ENCODE measurements at regions of chr1 and their contacts with region 1.

Region 1: DNA sequence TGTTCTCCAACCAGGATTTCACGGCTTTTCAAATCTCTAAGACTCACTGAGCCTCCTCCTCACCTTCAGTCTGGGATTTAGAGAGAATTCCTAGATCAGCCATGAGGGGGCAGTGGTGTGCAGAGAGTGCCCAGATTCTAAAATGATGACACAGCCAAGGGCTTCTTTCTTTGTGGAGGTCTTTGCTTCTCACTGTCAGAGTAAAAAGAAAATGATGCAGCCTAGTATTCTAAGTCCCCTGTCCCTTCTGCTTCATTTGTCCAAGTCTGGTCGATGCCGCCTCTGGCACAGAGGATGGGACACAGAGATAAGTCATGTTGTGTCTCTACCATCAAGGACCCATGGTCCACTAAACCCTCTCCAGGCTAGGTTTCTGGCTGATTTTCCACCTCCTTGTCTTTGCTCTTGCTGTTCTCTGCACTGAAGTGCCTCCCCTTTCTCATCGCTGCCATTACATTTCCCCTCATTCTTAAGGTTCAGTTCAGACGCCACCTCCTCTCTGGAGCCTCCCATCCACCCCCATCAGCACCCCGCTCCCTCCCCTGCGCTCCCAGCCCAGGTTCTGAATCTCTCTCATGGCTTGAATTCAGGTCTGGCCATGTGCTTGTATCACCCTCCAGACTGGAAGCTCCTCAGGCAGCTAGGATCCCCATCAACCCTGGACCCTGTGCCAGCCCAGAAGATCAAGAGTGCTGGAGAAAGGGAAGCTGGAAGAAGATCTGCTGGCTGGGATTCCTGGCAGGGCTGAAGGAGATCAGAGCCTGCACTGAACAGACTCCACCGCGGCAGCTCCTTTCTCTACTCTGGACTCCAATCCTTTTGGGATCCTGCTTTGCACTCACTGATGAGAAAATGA is 12.0 kb upstream of the TINAGL1 start:
- DNase-seq: no peak
- ATAC-seq: peak; percentile 91
- H3K4me3 ChIP-seq: no peak overlapping the region
- H3K27ac ChIP-seq: no peak overlapping the region
- H3K4me1 ChIP-seq: no peaks in the 10 kb centered on the region
- H3K27me3 ChIP-seq: no peaks in the 10 kb centered on the region
- CTCF ChIP-seq: peak; percentile 82 to 86 (median 83)
- EP300 ChIP-seq: no peak
- POLR2A ChIP-seq: no peak
- RAD21 ChIP-seq: peak; percentile 95

Region 2: DNA sequence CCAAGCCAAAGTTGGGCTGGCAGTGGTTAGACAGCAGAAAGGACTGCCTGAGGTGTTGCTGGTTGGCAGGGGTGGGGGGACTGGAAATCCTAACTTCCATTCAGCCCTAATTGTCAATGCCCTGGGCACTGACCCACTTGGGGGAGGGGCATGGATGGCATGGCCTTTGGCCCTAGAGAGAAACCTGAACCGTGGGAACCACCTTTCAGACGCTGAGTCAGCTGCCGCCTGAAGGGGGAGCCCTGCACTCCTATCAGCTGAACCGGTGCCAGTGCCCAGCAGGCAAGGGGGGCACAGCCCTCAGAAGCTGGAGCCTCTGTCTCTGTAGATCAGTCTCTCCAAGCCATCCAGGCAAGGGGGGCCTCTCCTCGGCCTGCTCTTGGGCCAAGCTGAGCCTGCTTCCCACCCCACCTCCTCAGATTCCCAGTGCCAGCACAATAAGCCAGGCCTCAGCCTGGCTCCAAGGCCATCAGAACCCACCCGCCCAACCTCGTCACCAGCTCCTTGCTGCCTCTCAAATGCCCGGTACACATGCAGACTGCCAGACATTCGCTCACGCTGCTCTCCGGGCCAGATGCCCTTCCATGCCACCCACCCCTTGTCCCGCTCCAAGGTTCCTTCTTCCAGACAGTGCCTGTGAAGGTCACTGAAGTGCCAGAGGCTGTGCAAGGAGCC is 23.5 kb after region 1 on chr1:
- CTCF ChIA-PET with region 1: interaction called, 39 read pairs
- POLR2A ChIA-PET with region 1: no interaction called
- RAD21 ChIA-PET with region 1: interaction called, 9 read pairs
- SMC1A ChIA-PET with region 1: interaction called, 11 read pairs
- in situ Hi-C with region 1: no loop called
- intact Hi-C with region 1: no loop called
- DNase-seq: no peak
- ATAC-seq: peak; percentile 95
- H3K4me3 ChIP-seq: no peak overlapping the region
- H3K27ac ChIP-seq: no peak overlapping the region
- H3K4me1 ChIP-seq: no peaks in the 10 kb centered on the region
- H3K27me3 ChIP-seq: no peaks in the 10 kb centered on the region; a peak in 1 of 4 replicates
- CTCF ChIP-seq: peak; percentile 69 to 82 (median 72)
- EP300 ChIP-seq: no peak
- POLR2A ChIP-seq: no peak
- RAD21 ChIP-seq: peak; percentile 55

Region 3: DNA sequence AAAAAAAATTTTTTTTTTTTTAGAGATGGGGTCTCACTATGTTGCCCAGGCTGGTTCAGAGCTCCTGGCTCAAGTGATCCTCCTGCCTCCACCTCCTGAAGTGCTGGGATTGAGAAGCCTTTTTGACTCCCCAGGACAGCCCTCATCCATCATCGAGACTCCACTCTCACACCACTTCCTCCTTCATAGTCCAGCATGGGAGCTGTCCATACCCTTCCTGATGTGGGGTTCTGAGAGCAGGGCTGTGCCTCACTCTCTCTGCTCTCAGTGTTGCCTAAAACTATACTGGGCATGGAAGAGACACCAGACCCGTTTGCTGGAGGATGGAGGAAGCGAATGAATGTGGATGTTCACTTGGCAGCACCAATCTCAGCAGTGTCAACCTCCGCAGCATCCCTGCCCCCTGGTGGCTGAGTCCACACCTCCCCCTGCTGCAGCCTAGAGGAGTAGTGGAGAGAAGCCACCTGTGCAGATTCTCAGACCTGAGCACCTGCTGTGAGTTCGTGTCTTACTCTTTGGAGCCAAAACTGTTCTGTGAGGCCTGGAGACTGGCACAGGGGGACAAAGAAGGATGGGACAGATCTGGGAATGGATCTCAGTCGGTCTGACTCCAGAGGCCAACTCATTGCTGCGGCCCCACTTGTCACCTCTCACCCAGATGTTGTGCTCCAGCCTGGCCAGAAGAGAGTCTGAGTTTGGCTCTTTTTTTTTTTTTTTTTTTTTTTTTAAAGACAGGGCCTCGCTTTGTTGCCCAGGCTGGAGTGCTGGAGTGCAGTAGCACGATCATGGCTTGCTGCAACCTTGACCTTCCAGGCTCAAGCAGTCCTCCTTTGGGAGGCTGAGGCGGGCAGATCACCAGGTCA is 29.6 kb after region 1 on chr1:
- CTCF ChIA-PET with region 1: interaction called, 39 read pairs
- POLR2A ChIA-PET with region 1: interaction called, 3 read pairs
- RAD21 ChIA-PET with region 1: interaction called, 9 read pairs
- SMC1A ChIA-PET with region 1: interaction called, 11 read pairs
- in situ Hi-C with region 1: no loop called
- intact Hi-C with region 1: loop called (anchors 1 kb)
- DNase-seq: peak; percentile 26
- ATAC-seq: peak; percentile 100
- H3K4me3 ChIP-seq: no peak overlapping the region
- H3K27ac ChIP-seq: no peak overlapping the region
- H3K4me1 ChIP-seq: no peaks in the 10 kb centered on the region; the same call in 1 of the 2 replicates
- H3K27me3 ChIP-seq: no peaks in the 10 kb centered on the region
- CTCF ChIP-seq: peak; percentile 90 to 97 (median 97)
- EP300 ChIP-seq: no peak
- POLR2A ChIP-seq: no peak
- RAD21 ChIP-seq: peak; percentile 67

Region 4: GRCh38 chr1:31639543-31639942 is 75.2 kb after region 1 on chr1:
- CTCF ChIA-PET with region 1: interaction called, 8 read pairs
- POLR2A ChIA-PET with region 1: no interaction called
- RAD21 ChIA-PET with region 1: interaction called, 5 read pairs
- SMC1A ChIA-PET with region 1: interaction called, 7 read pairs
- in situ Hi-C with region 1: no loop called
- intact Hi-C with region 1: loop called (anchors 5 kb)
- DNase-seq: no peak
- ATAC-seq: no peak
- H3K4me3 ChIP-seq: no peak overlapping the region
- H3K27ac ChIP-seq: no peak overlapping the region
- H3K4me1 ChIP-seq: peaks cover 9% of the 10 kb centered on the region
- H3K27me3 ChIP-seq: no peaks in the 10 kb centered on the region
- CTCF ChIP-seq: no peak
- EP300 ChIP-seq: no peak
- POLR2A ChIP-seq: no peak
- RAD21 ChIP-seq: no peak

Region 5: GRCh38 chr1:31705080-31705866 is 140.9 kb after region 1 on chr1:
- CTCF ChIA-PET with region 1: interaction called, 9 read pairs
- POLR2A ChIA-PET with region 1: no interaction called
- RAD21 ChIA-PET with region 1: interaction called, 10 read pairs
- SMC1A ChIA-PET with region 1: interaction called, 5 read pairs
- in situ Hi-C with region 1: no loop called
- intact Hi-C with region 1: loop called (anchors 5 kb)
- DNase-seq: no peak
- ATAC-seq: peak; percentile 81
- H3K4me3 ChIP-seq: peak overlapping the region; percentile 2; the same call in 1 of the 2 replicates
- H3K27ac ChIP-seq: peak overlapping the region; percentile 62
- H3K4me1 ChIP-seq: peaks cover 45% of the 10 kb centered on the region
- H3K27me3 ChIP-seq: no peaks in the 10 kb centered on the region
- CTCF ChIP-seq: peak; percentile 32 to 78 (median 59); a peak in 5 of 6 replicates
- EP300 ChIP-seq: no peak
- POLR2A ChIP-seq: no peak
- RAD21 ChIP-seq: peak; percentile 79